ENCODE measurements at regions of chr5 and their contacts with region 1.

Region 1: GRCh38 chr5:83430130-83431010 is 41.2 kb upstream of the VCAN start:
- DNase-seq: no peak
- H3K4me3 ChIP-seq: no peak overlapping the region
- H3K27me3 ChIP-seq: no peaks in the 10 kb centered on the region
- CTCF ChIP-seq: peak; percentile 92

Region 2: GRCh38 chr5:83418356-83419321 is 11.7 kb before region 1 on chr5:
- CTCF ChIA-PET with region 1: interaction called, 12 read pairs
- POLR2A ChIA-PET with region 1: no interaction called
- DNase-seq: no peak
- H3K4me3 ChIP-seq: no peak overlapping the region
- H3K27me3 ChIP-seq: no peaks in the 10 kb centered on the region
- CTCF ChIP-seq: no peak